Endothelial cell of umbilical vein (primary cell): ENCODE measurements at regions of chr10 and their contacts with region 1.

Region 1: GRCh38 chr10:98309366-98310355 is 41.7 kb upstream of the LOXL4 start:
- DNase-seq: peak; percentile 74
- H3K4me3 ChIP-seq: no peak overlapping the region
- H3K27ac ChIP-seq: no peak overlapping the region
- H3K4me1 ChIP-seq: no peaks in the 10 kb centered on the region
- H3K27me3 ChIP-seq: peaks cover 8% of the 10 kb centered on the region in 2 experiments
- CTCF ChIP-seq: peak; percentile 89 to 96
- POLR2A ChIP-seq: no peak

Region 2: GRCh38 chr10:98045785-98046389 is 263.8 kb before region 1 on chr10:
- CTCF ChIA-PET with region 1: interaction called, 15 read pairs
- POLR2A ChIA-PET with region 1: no interaction called
- dilution Hi-C with region 1: no loop called
- intact Hi-C with region 1: no loop called
- DNase-seq: peak; percentile 53
- H3K4me3 ChIP-seq: no peak overlapping the region
- H3K27ac ChIP-seq: no peak overlapping the region
- H3K4me1 ChIP-seq: no peaks in the 10 kb centered on the region
- H3K27me3 ChIP-seq: peaks cover 3 to 5% of the 10 kb centered on the region in 2 experiments
- CTCF ChIP-seq: peak; percentile 90 to 91
- POLR2A ChIP-seq: no peak

Region 3: DNA sequence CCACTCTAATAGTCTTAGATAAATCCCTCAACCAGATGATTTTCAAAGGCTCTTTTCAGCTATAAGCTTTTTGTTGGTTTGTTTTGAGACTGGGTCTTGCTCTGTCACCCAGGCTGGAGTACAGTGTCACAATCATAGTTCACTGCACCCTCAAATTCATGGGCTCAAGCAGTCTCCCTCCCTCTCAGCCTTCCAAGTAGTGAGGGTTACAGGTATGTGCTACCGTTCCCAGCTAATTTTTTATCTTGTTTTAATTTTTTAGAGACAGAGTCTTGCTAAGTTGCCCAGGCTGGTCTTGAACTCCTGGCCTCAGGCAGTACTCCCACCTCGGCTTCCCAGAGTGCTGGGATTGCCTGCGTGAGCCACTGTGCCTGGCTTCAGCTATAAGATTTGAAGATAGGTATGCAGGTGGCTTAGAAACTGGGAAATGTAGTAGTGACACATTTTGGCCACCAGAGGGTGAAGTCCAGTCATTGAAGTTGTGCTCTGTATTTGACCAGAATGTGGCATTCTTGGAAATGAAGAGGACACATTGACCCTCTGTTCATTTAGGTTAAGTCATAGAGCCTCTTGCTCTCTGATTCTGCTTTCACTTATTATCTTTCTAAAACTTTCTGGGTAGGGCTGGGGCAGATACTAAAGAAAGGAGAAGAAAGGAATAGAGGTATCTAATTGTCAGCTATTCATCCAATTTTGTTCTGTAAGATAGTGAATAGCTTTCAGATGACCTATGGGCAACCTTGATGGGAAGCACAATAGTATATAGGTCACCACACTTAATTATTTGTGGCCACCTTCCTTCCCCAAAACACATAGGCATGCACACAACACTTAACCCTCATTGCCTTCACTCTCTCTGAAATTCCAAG is 139.2 kb before region 1 on chr10:
- CTCF ChIA-PET with region 1: interaction called, 264 read pairs
- POLR2A ChIA-PET with region 1: no interaction called
- dilution Hi-C with region 1: no loop called
- intact Hi-C with region 1: loop called (anchors 1 kb)
- DNase-seq: peak; percentile 67
- H3K4me3 ChIP-seq: no peak overlapping the region
- H3K27ac ChIP-seq: no peak overlapping the region
- H3K4me1 ChIP-seq: no peaks in the 10 kb centered on the region
- H3K27me3 ChIP-seq: no peaks in the 10 kb centered on the region
- CTCF ChIP-seq: peak; percentile 61 to 79
- POLR2A ChIP-seq: no peak

Region 4: GRCh38 chr10:98262571-98262970 is 47.1 kb before region 1 on chr10:
- CTCF ChIA-PET with region 1: interaction called, 73 read pairs
- POLR2A ChIA-PET with region 1: no interaction called
- dilution Hi-C with region 1: no loop called
- intact Hi-C with region 1: loop called (anchors 1 kb)
- DNase-seq: peak; percentile 38
- H3K4me3 ChIP-seq: no peak overlapping the region
- H3K27ac ChIP-seq: no peak overlapping the region
- H3K4me1 ChIP-seq: no peaks in the 10 kb centered on the region
- H3K27me3 ChIP-seq: no peaks in the 10 kb centered on the region
- CTCF ChIP-seq: peak; percentile 38 to 60
- POLR2A ChIP-seq: no peak

Region 5: GRCh38 chr10:98293560-98294269 is 15.9 kb before region 1 on chr10:
- CTCF ChIA-PET with region 1: interaction called, 13 read pairs
- POLR2A ChIA-PET with region 1: no interaction called
- dilution Hi-C with region 1: no loop called
- intact Hi-C with region 1: no loop called
- DNase-seq: no peak
- H3K4me3 ChIP-seq: no peak overlapping the region
- H3K27ac ChIP-seq: no peak overlapping the region
- H3K4me1 ChIP-seq: no peaks in the 10 kb centered on the region
- H3K27me3 ChIP-seq: peaks cover 6 to 11% of the 10 kb centered on the region in 2 experiments
- CTCF ChIP-seq: no peak
- POLR2A ChIP-seq: no peak

Region 6: DNA sequence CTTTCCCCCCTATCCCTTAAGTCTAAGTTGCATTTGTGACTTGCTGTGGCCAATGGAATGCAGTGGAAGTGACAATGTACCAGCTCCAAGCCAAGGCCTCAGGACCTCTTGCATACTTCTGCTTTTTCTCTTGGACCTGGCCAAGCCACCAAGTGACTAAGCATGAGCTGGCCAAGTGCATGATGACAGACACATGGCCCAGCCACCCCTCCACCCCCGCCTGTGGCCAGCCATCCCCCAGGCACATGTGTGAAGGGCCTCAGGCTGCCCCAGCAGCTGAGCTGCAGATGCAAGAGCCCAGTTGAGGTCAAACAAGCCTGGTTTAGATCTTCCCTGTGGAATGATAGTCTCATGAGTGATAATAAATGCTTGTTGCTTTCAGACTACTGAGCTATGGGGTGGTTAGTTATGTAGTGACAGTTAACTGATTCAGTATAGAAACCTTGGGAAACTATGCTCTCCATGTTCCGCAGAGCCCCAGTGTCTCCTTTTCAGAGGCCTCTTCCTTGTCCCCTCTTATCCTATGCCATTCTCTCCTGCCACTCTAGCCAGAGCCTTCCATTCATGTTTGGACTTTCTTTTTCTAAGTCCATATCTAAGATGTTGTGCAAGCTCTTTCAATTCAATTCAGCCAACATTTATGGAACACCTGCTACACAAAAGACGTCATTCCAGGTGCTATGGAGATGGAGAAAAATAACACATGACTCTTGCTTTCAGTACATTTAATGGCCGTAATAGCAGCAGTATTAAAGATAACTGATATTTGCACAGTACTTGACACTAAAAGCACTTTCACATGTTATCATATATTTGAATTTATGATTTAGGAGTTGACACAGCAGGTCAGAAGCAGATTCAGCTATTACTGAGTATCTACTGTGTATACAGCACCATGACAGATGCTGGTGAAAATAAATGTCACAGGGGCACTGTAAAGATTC is 13.8 kb after region 1 on chr10:
- CTCF ChIA-PET with region 1: interaction called, 19 read pairs
- POLR2A ChIA-PET with region 1: no interaction called
- dilution Hi-C with region 1: no loop called
- intact Hi-C with region 1: no loop called
- DNase-seq: peak; percentile 54
- H3K4me3 ChIP-seq: no peak overlapping the region
- H3K27ac ChIP-seq: no peak overlapping the region
- H3K4me1 ChIP-seq: peaks cover 9% of the 10 kb centered on the region
- H3K27me3 ChIP-seq: peaks cover 6 to 10% of the 10 kb centered on the region in 2 experiments
- CTCF ChIP-seq: no peak
- POLR2A ChIP-seq: no peak

Region 7: DNA sequence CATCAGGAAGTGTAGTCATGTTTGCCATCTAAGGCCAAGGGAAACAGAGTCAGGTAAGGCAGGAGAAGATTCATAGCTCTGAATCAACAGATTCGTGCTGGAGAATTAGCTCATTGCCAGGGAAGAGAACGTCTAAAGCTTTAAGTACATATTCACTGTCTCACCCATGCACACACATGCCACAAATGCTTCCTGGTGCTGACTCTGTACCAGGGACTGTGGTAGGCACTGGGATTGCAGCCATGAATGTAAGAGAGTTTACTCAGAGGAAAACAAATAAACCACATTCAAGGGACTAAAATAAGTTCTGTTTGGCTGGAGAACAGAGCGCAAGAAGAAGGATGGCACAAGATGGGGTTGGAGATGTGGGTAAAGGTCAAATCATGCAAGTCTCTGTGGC is 226.9 kb after region 1 on chr10:
- CTCF ChIA-PET with region 1: no interaction called
- POLR2A ChIA-PET with region 1: no interaction called
- dilution Hi-C with region 1: no loop called
- intact Hi-C with region 1: no loop called
- DNase-seq: no peak
- H3K4me3 ChIP-seq: no peak overlapping the region
- H3K27ac ChIP-seq: no peak overlapping the region
- H3K4me1 ChIP-seq: no peaks in the 10 kb centered on the region
- H3K27me3 ChIP-seq: no peaks in the 10 kb centered on the region
- CTCF ChIP-seq: no peak
- POLR2A ChIP-seq: no peak

Region 8: DNA sequence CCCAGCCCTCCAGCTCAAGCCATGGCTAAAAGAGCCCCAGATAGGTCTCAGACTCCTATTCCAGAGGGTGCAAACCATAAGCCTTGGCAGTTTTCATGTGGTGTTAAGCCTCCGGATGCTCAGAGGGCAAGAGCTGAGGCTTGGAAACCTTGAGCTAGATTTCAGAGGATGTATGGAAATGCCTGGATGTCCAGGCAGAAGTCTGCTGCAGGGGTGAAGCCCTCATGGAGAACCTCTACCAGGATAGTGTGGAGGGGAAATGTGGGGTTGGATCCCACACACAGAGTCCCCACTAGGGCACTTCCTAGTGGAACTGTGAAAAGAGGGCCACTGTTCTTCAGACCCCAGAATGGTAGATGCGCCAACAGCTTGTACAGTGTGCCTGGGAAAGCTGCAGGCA is 939.2 kb after region 1 on chr10:
- CTCF ChIA-PET with region 1: interaction called, 13 read pairs
- POLR2A ChIA-PET with region 1: no interaction called
- dilution Hi-C with region 1: no loop called
- intact Hi-C with region 1: no loop called
- DNase-seq: no peak
- H3K4me3 ChIP-seq: no peak overlapping the region
- H3K27ac ChIP-seq: no peak overlapping the region
- H3K4me1 ChIP-seq: no peaks in the 10 kb centered on the region
- H3K27me3 ChIP-seq: no peaks in the 10 kb centered on the region
- CTCF ChIP-seq: no peak
- POLR2A ChIP-seq: no peak

Region 9: GRCh38 chr10:99292159-99292558 is 982.5 kb after region 1 on chr10:
- CTCF ChIA-PET with region 1: no interaction called
- POLR2A ChIA-PET with region 1: no interaction called
- dilution Hi-C with region 1: no loop called
- intact Hi-C with region 1: no loop called
- DNase-seq: no peak
- H3K4me3 ChIP-seq: no peak overlapping the region
- H3K27ac ChIP-seq: no peak overlapping the region
- H3K4me1 ChIP-seq: no peaks in the 10 kb centered on the region
- H3K27me3 ChIP-seq: no peaks in the 10 kb centered on the region
- CTCF ChIP-seq: no peak
- POLR2A ChIP-seq: no peak